ENCODE measurements at regions of chr4 and their contacts with region 1.

Region 1: GRCh38 chr4:138910607-138911336 is 104.8 kb upstream of the NOCT start:
- DNase-seq: peak; percentile 99
- H3K4me3 ChIP-seq: peak overlapping the region in 1 of 3 experiments; percentile 36
- H3K27ac ChIP-seq: peak overlapping the region; percentile 97
- H3K4me1 ChIP-seq: peaks cover 16% of the 10 kb centered on the region
- H3K27me3 ChIP-seq: no peaks in the 10 kb centered on the region
- CTCF ChIP-seq: no peak
- POLR2A ChIP-seq: no peak

Region 2: GRCh38 chr4:138053641-138054301 is 857.0 kb before region 1 on chr4:
- CTCF ChIA-PET with region 1: no interaction called
- POLR2A ChIA-PET with region 1: no interaction called
- dilution Hi-C with region 1: no loop called
- intact Hi-C with region 1: loop called (anchors 5 kb)
- DNase-seq: peak; percentile 93
- H3K4me3 ChIP-seq: peak overlapping the region in 1 of 3 experiments; percentile 6
- H3K27ac ChIP-seq: peak overlapping the region; percentile 92
- H3K4me1 ChIP-seq: peaks cover 63% of the 10 kb centered on the region
- H3K27me3 ChIP-seq: no peaks in the 10 kb centered on the region
- CTCF ChIP-seq: no peak
- POLR2A ChIP-seq: peak; percentile 64

Region 3: GRCh38 chr4:138114434-138114833 is 796.3 kb before region 1 on chr4:
- CTCF ChIA-PET with region 1: no interaction called
- POLR2A ChIA-PET with region 1: no interaction called
- dilution Hi-C with region 1: no loop called
- intact Hi-C with region 1: loop called (anchors 1 kb)
- DNase-seq: peak; percentile 36
- H3K4me3 ChIP-seq: no peak overlapping the region
- H3K27ac ChIP-seq: peak overlapping the region; percentile 43
- H3K4me1 ChIP-seq: peaks cover 53% of the 10 kb centered on the region
- H3K27me3 ChIP-seq: no peaks in the 10 kb centered on the region
- CTCF ChIP-seq: no peak
- POLR2A ChIP-seq: no peak

Region 4: GRCh38 chr4:138174981-138175794 is 735.6 kb before region 1 on chr4:
- CTCF ChIA-PET with region 1: no interaction called
- POLR2A ChIA-PET with region 1: no interaction called
- dilution Hi-C with region 1: no loop called
- intact Hi-C with region 1: loop called (anchors 5 kb)
- DNase-seq: peak; percentile 55
- H3K4me3 ChIP-seq: no peak overlapping the region
- H3K27ac ChIP-seq: no peak overlapping the region
- H3K4me1 ChIP-seq: peaks cover 10% of the 10 kb centered on the region
- H3K27me3 ChIP-seq: no peaks in the 10 kb centered on the region
- CTCF ChIP-seq: no peak
- POLR2A ChIP-seq: no peak

Region 5: GRCh38 chr4:138235419-138235952 is 675.3 kb before region 1 on chr4:
- CTCF ChIA-PET with region 1: no interaction called
- POLR2A ChIA-PET with region 1: no interaction called
- dilution Hi-C with region 1: no loop called
- intact Hi-C with region 1: loop called (anchors 1 kb)
- DNase-seq: peak; percentile 96
- H3K4me3 ChIP-seq: no peak overlapping the region
- H3K27ac ChIP-seq: peak overlapping the region; percentile 89
- H3K4me1 ChIP-seq: peaks cover 50% of the 10 kb centered on the region
- H3K27me3 ChIP-seq: no peaks in the 10 kb centered on the region
- CTCF ChIP-seq: no peak
- POLR2A ChIP-seq: peak; percentile 44

Region 6: DNA sequence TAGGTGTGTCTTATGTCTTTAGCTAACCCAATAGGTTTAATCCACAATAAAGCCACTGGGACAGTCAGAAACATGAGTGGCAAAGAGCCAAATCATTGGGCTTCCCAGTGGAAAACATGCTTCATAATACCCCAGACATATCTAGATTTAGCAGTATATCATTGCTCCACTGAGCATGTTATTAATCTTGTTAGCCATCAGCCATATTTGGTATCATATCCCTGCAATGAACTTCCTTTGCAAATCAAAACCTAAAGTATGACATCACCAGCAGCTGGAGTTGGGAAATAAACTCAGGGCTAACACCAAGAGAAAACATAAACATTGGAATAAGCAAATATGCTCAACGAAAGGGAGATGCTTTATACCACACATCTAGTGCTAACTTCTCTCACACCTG is 176.0 kb before region 1 on chr4:
- CTCF ChIA-PET with region 1: no interaction called
- POLR2A ChIA-PET with region 1: no interaction called
- dilution Hi-C with region 1: no loop called
- intact Hi-C with region 1: loop called (anchors 1 kb)
- DNase-seq: peak; percentile 90
- H3K4me3 ChIP-seq: no peak overlapping the region
- H3K27ac ChIP-seq: peak overlapping the region; percentile 34
- H3K4me1 ChIP-seq: peaks cover 30% of the 10 kb centered on the region
- H3K27me3 ChIP-seq: no peaks in the 10 kb centered on the region
- CTCF ChIP-seq: no peak
- POLR2A ChIP-seq: no peak

Region 7: DNA sequence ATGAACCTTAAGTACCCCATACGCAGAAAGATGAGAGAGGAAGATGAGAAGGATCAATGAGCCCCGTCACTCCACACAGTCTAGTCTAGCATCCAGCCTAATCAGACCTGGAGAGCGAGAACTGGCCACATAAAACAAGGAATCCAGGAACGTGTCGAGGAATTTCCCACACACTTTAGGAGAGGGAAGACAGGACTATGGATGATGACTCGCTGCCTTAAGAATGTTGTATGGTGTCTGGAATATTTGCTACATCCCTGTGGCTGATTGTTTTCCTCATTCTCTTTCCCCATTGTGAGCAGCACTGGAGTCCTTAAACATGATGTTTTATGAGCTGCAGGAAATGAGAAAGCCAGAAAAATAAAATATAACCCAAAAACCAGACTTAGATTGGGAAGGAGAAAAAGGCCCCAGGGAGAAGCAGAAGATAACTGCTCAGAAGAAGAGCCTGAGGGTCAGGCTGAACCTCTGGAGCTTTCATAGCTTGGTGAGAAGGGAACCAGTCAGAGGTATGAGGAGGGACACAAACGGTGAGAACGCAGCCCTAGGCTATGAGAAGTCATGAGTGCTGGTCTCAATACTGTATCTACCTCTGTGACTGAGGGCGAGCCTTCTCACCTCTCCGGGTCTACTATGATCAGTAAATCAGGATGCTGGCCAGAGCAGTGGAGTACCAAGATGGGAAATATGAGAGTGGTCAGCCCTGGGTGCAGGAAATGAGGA is 34.7 kb before region 1 on chr4:
- CTCF ChIA-PET with region 1: interaction called, 19 read pairs
- POLR2A ChIA-PET with region 1: no interaction called
- dilution Hi-C with region 1: no loop called
- intact Hi-C with region 1: loop called (anchors 1 kb)
- DNase-seq: peak; percentile 56
- H3K4me3 ChIP-seq: no peak overlapping the region
- H3K27ac ChIP-seq: peak overlapping the region; percentile 78
- H3K4me1 ChIP-seq: peaks cover 12% of the 10 kb centered on the region
- H3K27me3 ChIP-seq: peaks cover 2 to 3% of the 10 kb centered on the region in 2 experiments
- CTCF ChIP-seq: no peak
- POLR2A ChIP-seq: no peak